H1 (cell line): ENCODE measurements at regions of chr7 and their contacts with region 1.

Region 1: GRCh38 chr7:18495412-18496340 is at the start of gene HDAC9:
- DNase-seq: peak in 1 of 2 experiments; percentile 57
- H3K4me3 ChIP-seq: peak within 1 kb of the TSS; percentile 32 to 68 (median 46)
- H3K27ac ChIP-seq: peak within 1 kb of the TSS; percentile 64; the same call in 1 of the 2 replicates
- H3K4me1 ChIP-seq: peaks cover 2 to 10% (median 9%) of the 10 kb centered on the region in 4 experiments; a peak in 4 of 7 replicates
- H3K27me3 ChIP-seq: no peaks in the 10 kb centered on the region
- CTCF ChIP-seq: no peak
- EP300 ChIP-seq: no peak
- POLR2A ChIP-seq: peak; percentile 86 to 97
- RAD21 ChIP-seq: no peak
- total RNA-seq, gene HDAC9: 9.4 and 13.1 TPM in 2 replicates

Region 2: DNA sequence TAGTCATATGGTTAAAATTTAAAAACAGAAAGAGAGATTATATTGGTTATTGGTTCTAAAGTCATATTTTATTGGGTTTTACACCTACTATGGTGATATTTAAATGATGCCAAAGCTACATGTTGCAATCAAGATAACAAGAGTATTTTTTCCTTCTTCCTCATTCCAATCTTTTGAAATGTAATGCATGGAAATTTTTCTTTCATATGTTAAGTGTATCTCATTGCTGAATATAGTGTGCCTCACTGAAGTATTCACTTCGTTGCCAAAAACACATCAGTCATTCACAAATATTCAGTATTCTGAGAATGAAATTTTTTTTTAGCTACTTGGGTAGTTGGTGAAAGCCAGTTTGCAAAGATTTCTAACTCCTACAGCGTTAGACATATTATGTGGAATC is 19.4 kb after region 1 on chr7:
- CTCF ChIA-PET with region 1: no interaction called
- POLR2A ChIA-PET with region 1: interaction called, 47 read pairs
- DNase-seq: no peak
- H3K4me3 ChIP-seq: peak overlapping the region in 1 of 4 experiments; percentile 16; a peak in 1 of 8 replicates
- H3K27ac ChIP-seq: no peak overlapping the region
- H3K4me1 ChIP-seq: peaks cover 0 to 7% (median 4%) of the 10 kb centered on the region in 4 experiments; a peak in 4 of 7 replicates
- H3K27me3 ChIP-seq: no peaks in the 10 kb centered on the region
- CTCF ChIP-seq: no peak
- EP300 ChIP-seq: no peak
- POLR2A ChIP-seq: no peak
- RAD21 ChIP-seq: no peak